ENCODE measurements at regions of chr3 and their contacts with region 1.

Region 1: DNA sequence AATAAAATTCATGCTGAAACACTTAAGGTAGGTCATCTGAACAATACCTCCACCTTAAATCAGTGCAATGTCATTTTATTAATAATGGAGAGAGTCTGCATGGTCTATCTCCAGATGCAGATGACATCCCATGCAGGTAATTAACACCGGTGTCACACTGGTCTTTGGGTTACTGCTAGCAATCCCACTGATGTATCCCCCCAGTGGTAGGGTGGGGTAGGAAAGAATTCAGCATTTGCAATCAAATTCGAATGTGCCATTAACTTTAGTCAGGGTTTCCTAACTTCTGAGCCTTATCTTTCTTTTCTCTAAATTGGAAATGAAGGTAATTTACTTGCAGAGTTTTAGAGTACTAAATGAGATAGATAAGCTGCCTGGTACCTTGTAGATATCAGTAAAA is 44.4 kb downstream of the KIF15 start:
- DNase-seq: no peak
- ATAC-seq: no peak
- H3K4me3 ChIP-seq: no peak overlapping the region
- H3K27ac ChIP-seq: no peak overlapping the region
- H3K4me1 ChIP-seq: no peaks in the 10 kb centered on the region
- H3K27me3 ChIP-seq: no peaks in the 10 kb centered on the region
- CTCF ChIP-seq: no peak
- POLR2A ChIP-seq: no peak
- RAD21 ChIP-seq: no peak

Region 2: DNA sequence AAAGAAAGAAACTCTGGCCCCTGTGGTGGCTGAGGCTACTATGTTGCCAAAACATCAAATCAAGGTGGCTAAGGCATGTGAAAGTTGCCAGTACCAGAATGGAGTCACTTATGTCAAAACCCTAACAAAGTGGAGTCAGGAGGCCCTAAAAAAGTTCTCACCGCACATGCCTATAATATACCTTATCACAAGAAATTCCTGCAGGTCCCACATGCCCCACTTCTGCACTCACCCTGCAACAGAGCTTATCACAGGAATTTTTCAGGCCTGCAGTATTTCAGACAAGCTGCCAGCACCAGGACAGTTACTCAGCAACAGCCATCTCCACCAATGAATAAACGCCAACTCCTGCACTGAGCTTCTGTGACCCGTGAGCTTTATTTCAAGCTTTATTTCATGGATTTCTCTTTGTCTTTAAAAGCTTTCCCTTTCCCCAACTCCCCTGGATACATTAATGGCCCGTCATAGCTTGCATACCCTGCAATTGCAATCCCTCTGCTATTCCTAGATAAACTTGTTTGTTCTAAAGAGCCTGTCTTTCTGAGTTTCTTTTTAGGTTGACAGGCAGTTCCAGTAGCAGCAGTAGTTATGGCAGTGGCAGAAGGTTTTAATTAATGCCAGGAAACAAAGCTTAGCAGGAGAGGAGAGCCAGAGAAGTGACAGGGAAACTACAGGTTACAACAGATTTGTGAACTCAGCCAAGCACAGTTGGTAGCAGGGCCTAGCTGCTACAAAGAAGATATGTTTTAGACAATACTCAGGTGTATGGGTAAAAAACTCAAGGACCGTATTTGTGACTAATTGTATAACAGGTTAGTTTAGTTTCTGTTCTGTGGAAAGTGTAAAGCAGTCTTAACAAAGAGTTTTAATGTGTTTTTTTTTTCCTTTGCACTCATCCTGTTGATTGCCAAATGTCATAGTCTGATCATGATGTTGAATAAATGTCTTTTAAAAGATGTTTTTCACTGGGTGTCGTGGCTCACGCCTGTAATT is 39.9 kb after region 1 on chr3:
- CTCF ChIA-PET with region 1: no interaction called
- POLR2A ChIA-PET with region 1: no interaction called
- dilution Hi-C with region 1: no loop called
- in situ Hi-C with region 1: no loop called
- intact Hi-C with region 1: loop called (anchors 5 kb)
- DNase-seq: peak; percentile 59
- ATAC-seq: peak; percentile 90
- H3K4me3 ChIP-seq: no peak overlapping the region
- H3K27ac ChIP-seq: no peak overlapping the region
- H3K4me1 ChIP-seq: no peaks in the 10 kb centered on the region
- H3K27me3 ChIP-seq: no peaks in the 10 kb centered on the region
- CTCF ChIP-seq: no peak
- POLR2A ChIP-seq: no peak
- RAD21 ChIP-seq: no peak

Measured in IMR-90 (cell line).